Activated T-helper 2 cell treated with anti-CD3 and anti-CD28 coated beads, Interferon-gamma antibody, Interleukin-2, Interleukin-4, amounts not matched to agents 10 μg/mL and 5 μg/mL and 100 μg/mL, durations not matched to agents 14 hours and 24 hours and 36 hours (primary cell): ENCODE measurements at regions of chr15 and their contacts with region 1.

Region 1: GRCh38 chr15:25739687-25740121 is 123.4 kb downstream of the ATP10A start:
- DNase-seq: no peak
- H3K4me3 Mint-ChIP-seq: no peak overlapping the region
- H3K27ac Mint-ChIP-seq: peak overlapping the region; percentile 47
- H3K4me1 Mint-ChIP-seq: peaks cover 16% of the 10 kb centered on the region
- H3K27me3 Mint-ChIP-seq: no peaks in the 10 kb centered on the region

Region 2: DNA sequence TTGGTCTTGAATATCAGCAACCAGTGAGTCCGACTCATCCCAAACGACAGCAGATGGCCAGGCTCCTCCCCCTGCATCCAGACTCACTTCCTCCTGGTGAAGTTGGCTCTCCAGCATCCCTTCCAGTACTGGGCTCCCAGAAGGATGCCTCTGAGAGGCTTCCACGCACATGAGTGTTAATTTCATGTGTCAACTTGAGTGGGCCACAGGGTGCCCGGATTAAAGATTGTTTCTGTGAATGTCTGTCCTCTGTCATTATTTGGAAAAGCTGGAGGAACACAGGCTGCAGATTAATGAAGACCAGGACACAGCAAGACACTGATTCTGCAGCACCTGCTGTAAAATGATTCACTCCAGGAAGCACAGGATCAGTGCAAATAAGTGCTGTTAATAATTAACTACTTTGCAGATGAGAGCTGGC is 23.6 kb after region 1 on chr15:
- intact Hi-C with region 1: no loop called
- DNase-seq: no peak
- H3K4me3 Mint-ChIP-seq: no peak overlapping the region
- H3K27ac Mint-ChIP-seq: no peak overlapping the region
- H3K4me1 Mint-ChIP-seq: peaks cover 7% of the 10 kb centered on the region
- H3K27me3 Mint-ChIP-seq: no peaks in the 10 kb centered on the region

Region 3: DNA sequence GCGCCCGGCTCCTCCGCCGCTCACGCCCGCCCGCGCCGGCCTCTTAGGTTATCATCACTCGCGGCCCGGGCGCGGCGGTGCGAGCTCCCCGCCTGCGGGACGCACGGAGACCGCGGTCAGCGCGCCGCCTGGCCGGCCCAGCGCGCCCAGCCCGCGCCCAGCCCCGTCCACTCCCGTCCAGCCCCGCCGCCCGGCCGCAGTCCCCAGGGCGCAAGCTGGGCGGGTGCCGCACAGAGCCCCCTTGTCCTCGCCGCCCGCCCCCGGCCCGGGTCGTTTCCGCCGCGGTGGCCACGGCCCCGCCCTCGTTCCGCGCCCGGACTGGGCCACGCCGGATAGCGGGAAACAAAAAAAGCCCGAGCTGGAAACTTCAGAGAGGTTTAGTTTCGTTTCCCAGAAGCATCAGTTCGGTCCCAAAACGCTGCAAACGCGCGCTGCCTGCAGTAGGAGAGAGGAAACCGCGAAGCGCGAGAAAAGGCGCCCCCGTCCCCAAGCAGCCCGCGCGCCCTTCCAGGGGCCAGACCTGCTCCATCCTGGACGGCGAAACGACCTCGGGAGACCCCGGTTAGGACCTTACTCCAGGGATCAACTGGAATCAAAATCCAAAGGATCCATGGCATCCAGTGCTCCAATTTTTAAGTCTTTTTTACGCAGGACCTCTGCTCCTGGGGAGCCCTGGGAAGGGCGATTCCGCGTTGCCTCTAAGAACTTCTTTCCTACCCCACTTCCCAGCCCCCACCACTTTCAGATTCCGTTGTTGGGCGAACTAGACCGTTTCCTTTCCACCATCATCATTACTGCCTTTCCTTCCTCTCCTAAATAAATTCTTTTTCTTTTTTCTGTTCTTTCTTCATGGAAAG is 123.6 kb after region 1 on chr15 and contains the start of gene ATP10A:
- intact Hi-C with region 1: loop called (anchors 10 kb)
- DNase-seq: peak; percentile 64
- H3K4me3 Mint-ChIP-seq: peak within 1 kb of the TSS; percentile 92
- H3K27ac Mint-ChIP-seq: peak within 1 kb of the TSS; percentile 88
- H3K4me1 Mint-ChIP-seq: peaks cover 37% of the 10 kb centered on the region
- H3K27me3 Mint-ChIP-seq: peaks cover 11% of the 10 kb centered on the region
- total RNA-seq, gene ATP10A: 40.1 and 44.4 TPM in 2 replicates